Activated T-helper 2 cell treated with anti-CD3 and anti-CD28 coated beads, Interferon-gamma antibody, Interleukin-2, Interleukin-4, amounts not matched to agents 10 μg/mL and 5 μg/mL and 100 μg/mL, durations not matched to agents 14 hours and 24 hours and 36 hours (primary cell): ENCODE measurements at regions of chr12 and their contacts with region 1.

Region 1: DNA sequence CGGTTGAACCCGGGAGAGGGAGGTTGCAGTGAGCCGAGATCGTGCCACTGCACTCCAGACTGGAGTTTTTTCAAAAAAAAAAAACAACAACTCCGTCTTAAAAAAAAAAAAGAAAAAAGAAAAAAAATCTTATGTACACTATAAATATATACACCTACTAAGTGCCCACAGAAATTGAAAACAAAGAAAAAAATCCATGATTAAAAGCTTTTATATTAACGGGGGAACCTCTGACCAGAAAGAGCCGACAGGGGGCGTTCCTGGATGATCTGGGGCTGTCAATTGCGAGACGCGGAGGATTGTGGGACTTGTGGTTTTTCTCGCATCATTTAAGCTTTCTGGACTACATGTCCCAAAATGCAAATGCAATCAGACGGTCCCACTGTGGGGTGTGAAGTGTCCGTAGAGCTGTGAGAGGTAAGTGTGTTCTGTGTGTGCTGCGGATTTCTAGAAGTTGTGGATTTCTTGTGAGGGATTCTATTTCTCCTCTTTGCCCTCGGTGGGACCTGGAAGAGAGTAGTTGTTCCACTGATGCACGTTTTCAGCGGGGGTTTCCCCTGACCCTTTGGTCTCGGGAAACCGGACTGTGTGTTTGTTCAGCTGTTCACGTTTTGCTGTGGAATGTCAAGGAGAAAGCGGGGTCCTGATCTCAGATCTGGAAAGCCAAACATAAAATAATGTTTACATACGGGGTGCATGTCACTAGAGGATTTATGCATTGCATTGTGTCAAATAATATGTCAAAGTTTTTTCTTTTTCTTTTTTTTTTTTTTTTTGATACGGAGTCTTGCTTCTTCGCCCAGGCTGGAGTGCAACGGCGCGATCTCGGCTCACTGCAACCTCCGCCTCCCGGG is at the start of gene SIRT4:
- DNase-seq: peak; percentile 82
- H3K4me3 Mint-ChIP-seq: peak within 1 kb of the TSS; percentile 86
- H3K27ac Mint-ChIP-seq: peak within 1 kb of the TSS; percentile 71
- H3K4me1 Mint-ChIP-seq: peaks cover 7% of the 10 kb centered on the region
- H3K27me3 Mint-ChIP-seq: no peaks in the 10 kb centered on the region
- total RNA-seq, gene SIRT4: 2.0 and 2.2 TPM in 2 replicates

Region 2: DNA sequence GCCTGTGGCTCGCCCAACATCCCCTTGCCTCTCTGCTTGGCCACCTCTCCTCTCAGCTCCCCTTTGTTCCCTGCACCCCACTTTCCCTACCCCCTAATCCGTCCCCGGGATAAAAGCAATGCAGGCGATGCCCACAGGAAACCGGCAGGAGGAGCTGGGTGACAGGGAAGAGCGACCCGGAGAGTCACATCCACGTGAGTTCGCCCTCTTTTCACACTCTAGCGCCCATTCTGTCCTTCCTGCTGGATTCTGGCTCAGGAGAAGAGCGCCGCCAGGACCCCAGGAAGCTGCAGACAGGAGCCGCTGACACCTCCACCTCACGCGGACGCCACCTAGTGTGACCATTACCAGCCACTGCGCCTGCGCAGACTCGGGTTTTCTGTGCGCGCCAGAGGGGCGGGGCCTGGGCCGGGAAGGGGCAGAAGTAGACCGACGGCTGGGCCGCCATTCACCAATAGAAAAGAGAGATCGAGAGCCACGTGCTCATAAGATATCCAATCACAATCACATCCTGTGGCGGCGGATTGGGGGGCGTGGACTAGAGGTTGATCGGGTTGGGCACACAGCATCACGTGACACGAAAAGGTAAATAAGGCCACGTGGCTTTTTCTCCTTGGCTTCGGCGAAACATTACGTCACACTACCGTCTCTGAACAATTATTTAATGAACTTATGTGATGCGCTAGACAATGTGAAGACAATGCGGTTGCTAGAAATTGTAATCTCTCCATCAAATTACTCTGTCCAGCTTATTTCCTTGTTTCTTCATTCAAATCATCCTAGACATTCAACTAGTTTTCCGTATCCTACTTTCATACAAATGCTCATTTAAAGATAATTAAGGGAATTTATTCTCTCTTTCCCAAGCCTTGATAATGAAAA is 15.3 kb after region 1 on chr12:
- intact Hi-C with region 1: loop called (anchors 1 kb)
- DNase-seq: peak; percentile 100
- H3K4me3 Mint-ChIP-seq: peak overlapping the region; percentile 95
- H3K27ac Mint-ChIP-seq: peak overlapping the region; percentile 96
- H3K4me1 Mint-ChIP-seq: peaks cover 11% of the 10 kb centered on the region
- H3K27me3 Mint-ChIP-seq: peaks cover 4% of the 10 kb centered on the region

Region 3: GRCh38 chr12:120342156-120342555 is 40.0 kb after region 1 on chr12:
- intact Hi-C with region 1: no loop called
- DNase-seq: no peak
- H3K4me3 Mint-ChIP-seq: no peak overlapping the region
- H3K27ac Mint-ChIP-seq: no peak overlapping the region
- H3K4me1 Mint-ChIP-seq: no peaks in the 10 kb centered on the region
- H3K27me3 Mint-ChIP-seq: peaks cover 7% of the 10 kb centered on the region